ENCODE measurements at regions of chr16 and their contacts with region 1.

Region 1: DNA sequence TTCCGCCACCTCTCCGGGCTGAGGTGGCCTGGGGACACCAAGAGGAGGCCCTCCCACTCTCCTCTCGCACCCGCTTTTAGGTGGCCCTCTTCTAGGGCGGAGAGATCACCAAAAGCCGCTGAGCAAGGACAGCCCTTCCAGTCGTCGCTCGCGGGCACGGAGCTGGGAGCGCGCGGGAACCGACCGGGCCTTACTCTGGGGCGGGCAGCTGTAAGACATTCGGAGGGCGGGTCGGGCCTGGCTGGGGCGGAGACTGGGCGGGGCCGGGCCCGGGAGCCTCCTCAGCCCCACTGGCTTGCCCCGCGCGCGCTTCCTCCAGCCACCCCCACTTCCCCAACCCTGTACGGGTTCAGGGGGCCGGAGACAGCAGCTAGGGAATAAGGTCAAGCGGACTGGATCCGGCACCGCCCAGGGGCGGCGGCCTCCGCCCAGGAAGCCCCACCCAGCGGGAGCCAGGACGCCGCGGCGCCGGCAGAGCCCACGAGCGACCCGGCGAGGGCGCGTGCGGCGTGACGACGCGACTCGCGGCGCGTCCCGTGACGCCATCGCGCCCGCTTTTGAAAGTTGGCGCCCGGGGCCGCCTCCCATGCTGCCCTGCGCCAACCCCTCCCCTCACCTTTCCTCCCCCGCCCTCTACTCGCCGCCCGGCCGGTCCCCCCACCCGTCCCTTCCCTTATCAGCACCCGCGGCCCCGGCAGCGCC is 351 bp upstream of the CTCF start:
- DNase-seq: peak; percentile 98
- H3K4me3 ChIP-seq: peak overlapping the region; percentile 73 to 75
- H3K27ac ChIP-seq: peak overlapping the region; percentile 96
- H3K4me1 ChIP-seq: peaks cover 0 to 13% of the 10 kb centered on the region in 2 experiments; a peak in 2 of 4 replicates
- H3K27me3 ChIP-seq: no peaks in the 10 kb centered on the region
- CTCF ChIP-seq: no peak
- EP300 ChIP-seq: peak in 1 of 2 experiments; percentile 9; a peak in 1 of 4 replicates
- RAD21 ChIP-seq: no peak

Region 2: GRCh38 chr16:67546761-67547422 is 15.1 kb before region 1 on chr16:
- CTCF ChIA-PET with region 1: interaction called, 54 read pairs
- POLR2A ChIA-PET with region 1: interaction called, 13 read pairs
- DNase-seq: peak; percentile 91
- H3K4me3 ChIP-seq: peak overlapping the region in 1 of 2 experiments; percentile 27; a peak in 1 of 4 replicates
- H3K27ac ChIP-seq: no peak overlapping the region; a peak in 1 of 4 replicates
- H3K4me1 ChIP-seq: no peaks in the 10 kb centered on the region
- H3K27me3 ChIP-seq: no peaks in the 10 kb centered on the region
- CTCF ChIP-seq: peak; percentile 85
- EP300 ChIP-seq: no peak
- RAD21 ChIP-seq: peak; percentile 84

Region 3: DNA sequence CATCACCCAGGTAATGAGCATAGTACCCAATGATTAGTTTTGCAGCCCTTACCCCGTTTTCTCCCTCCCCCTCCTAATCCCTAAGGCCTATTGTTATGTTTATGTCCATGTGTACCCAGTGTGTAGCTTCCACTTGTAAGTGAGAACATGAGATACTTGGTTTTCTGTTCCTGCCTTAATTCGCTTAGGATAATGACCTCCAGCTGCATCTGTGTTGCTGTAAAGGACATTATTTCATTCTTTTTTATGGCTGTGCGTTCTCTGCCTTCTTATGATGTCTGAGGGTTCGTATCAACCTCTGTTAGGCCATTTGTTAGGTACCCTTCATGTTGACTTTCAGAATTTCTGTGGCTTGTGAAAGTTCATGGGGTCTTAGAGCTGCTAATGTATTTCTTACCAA is 31.3 kb after region 1 on chr16:
- CTCF ChIA-PET with region 1: interaction called, 19 read pairs
- POLR2A ChIA-PET with region 1: interaction called, 3 read pairs
- DNase-seq: peak; percentile 27
- H3K4me3 ChIP-seq: no peak overlapping the region
- H3K27ac ChIP-seq: peak overlapping the region in 1 of 2 experiments; percentile 11; a peak in 2 of 4 replicates
- H3K4me1 ChIP-seq: no peaks in the 10 kb centered on the region; a peak in 1 of 4 replicates
- H3K27me3 ChIP-seq: no peaks in the 10 kb centered on the region
- CTCF ChIP-seq: no peak
- EP300 ChIP-seq: no peak
- RAD21 ChIP-seq: no peak

Region 4: GRCh38 chr16:67641779-67642708 is 80.1 kb after region 1 on chr16:
- CTCF ChIA-PET with region 1: interaction called, 263 read pairs
- POLR2A ChIA-PET with region 1: no interaction called
- DNase-seq: no peak
- H3K4me3 ChIP-seq: no peak overlapping the region
- H3K27ac ChIP-seq: no peak overlapping the region
- H3K4me1 ChIP-seq: peaks cover 0 to 4% of the 10 kb centered on the region in 2 experiments; a peak in 1 of 4 replicates
- H3K27me3 ChIP-seq: no peaks in the 10 kb centered on the region
- CTCF ChIP-seq: no peak
- EP300 ChIP-seq: no peak
- RAD21 ChIP-seq: no peak

Region 5: DNA sequence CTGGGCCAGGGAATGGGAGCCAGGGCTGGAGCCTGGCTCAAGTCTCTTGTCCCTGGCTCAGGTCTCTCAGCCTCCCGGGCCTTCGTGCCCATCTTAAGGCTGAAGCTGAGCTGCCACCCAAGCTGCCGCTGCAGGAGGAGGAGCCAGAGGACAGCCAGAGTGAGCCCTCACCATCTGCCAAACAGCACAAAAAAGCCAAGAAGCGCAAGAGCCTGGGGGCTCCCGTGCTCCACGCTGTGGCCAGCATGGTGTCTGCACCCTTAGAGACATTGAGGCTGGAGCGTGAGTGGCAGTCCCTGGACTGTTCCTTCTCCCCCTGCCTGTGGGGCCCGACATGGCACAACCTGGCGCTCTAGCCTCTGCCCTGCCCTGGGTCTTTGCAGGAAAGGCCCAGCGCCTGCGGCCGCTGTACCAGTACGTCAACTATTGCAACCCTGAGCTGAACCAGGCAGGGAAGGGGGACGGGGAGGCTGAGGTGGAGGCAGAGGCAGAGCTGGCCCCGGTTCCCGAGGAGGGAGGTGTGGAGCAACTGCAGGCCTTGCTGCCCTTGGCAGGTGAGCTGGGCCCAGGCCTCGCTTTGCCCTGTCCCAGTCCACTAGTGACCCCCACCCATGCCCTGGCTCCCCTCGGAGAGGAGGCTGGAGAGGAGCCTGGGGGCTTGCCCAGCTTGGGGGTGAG is 106.0 kb after region 1 on chr16:
- CTCF ChIA-PET with region 1: interaction called, 48 read pairs
- POLR2A ChIA-PET with region 1: interaction called, 11 read pairs
- DNase-seq: peak; percentile 95
- H3K4me3 ChIP-seq: peak overlapping the region; percentile 19 to 67; a peak in 2 of 4 replicates
- H3K27ac ChIP-seq: peak overlapping the region; percentile 56 to 86; a peak in 3 of 4 replicates
- H3K4me1 ChIP-seq: peaks cover 12 to 31% of the 10 kb centered on the region in 2 experiments; a peak in 2 of 4 replicates
- H3K27me3 ChIP-seq: no peaks in the 10 kb centered on the region
- CTCF ChIP-seq: peak; percentile 82
- EP300 ChIP-seq: no peak
- RAD21 ChIP-seq: peak; percentile 74

Measured in SK-N-SH (cell line).